ENCODE measurements at regions of chr12 and their contacts with region 1.

Region 1: GRCh38 chr12:121626087-121626852 is at the start of gene ORAI1:
- DNase-seq: peak; percentile 97
- H3K4me3 Mint-ChIP-seq: peak within 1 kb of the TSS; percentile 90
- H3K27ac Mint-ChIP-seq: peak within 1 kb of the TSS; percentile 87
- H3K4me1 Mint-ChIP-seq: peaks cover 46% of the 10 kb centered on the region
- H3K27me3 Mint-ChIP-seq: no peaks in the 10 kb centered on the region
- total RNA-seq, gene ORAI1: 69.0 to 70.3 TPM

Region 2: DNA sequence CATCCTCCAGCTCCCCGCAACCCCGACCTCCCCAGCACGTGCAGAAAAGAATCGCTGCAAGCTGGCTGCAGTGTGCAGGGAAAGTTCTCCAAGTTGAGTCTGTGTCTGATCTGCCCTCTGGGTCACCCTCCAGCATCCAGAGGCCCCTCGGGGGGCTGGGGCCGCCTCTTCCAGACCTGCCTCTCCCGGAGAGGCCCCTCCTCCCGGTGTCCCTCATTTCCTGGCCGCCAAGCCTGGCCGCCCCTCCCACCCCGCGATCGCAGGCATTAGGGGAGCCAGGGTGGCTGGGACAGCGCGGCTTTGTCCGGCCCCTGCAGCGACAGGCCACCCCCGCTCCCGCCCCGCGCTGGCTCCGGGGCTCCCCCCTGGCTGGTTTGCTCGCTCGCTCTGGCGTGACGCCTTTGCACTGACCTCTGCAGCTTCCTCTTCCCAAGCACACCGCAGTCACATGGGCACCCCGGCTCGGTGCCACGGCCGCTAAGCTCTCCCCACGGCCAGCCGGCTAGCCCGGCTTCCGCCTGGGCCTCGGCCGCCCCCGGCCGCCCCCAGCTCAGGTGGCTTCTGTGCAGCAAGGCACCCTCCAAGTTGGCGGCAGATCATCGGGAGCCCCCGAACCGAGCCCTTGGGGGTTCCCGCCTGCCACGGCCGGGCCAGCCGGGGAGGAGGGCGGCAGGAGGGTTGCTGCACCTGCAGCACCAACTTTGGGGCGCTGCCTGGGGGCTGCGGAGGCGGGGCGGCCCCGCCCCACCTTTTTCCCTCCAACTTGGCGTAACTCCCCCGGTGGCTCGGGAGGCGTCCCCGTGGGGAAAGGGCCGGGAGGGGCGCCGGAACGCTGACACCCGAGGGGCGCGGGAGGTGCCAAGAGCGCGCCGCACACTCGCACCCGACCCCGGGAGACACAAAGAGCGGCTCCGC is 89.1 kb before region 1 on chr12:
- CTCF ChIA-PET with region 1: interaction called, 6 read pairs
- POLR2A ChIA-PET with region 1: interaction called, 22 read pairs
- DNase-seq: peak; percentile 68
- H3K4me3 Mint-ChIP-seq: peak overlapping the region; percentile 74
- H3K27ac Mint-ChIP-seq: peak overlapping the region; percentile 63
- H3K4me1 Mint-ChIP-seq: peaks cover 54% of the 10 kb centered on the region
- H3K27me3 Mint-ChIP-seq: no peaks in the 10 kb centered on the region

Region 3: GRCh38 chr12:121579981-121580868 is 46.0 kb before region 1 on chr12:
- CTCF ChIA-PET with region 1: interaction called, 13 read pairs
- POLR2A ChIA-PET with region 1: interaction called, 89 read pairs
- DNase-seq: peak; percentile 80
- H3K4me3 Mint-ChIP-seq: peak overlapping the region; percentile 97
- H3K27ac Mint-ChIP-seq: peak overlapping the region; percentile 99
- H3K4me1 Mint-ChIP-seq: peaks cover 38% of the 10 kb centered on the region
- H3K27me3 Mint-ChIP-seq: no peaks in the 10 kb centered on the region

Region 4: DNA sequence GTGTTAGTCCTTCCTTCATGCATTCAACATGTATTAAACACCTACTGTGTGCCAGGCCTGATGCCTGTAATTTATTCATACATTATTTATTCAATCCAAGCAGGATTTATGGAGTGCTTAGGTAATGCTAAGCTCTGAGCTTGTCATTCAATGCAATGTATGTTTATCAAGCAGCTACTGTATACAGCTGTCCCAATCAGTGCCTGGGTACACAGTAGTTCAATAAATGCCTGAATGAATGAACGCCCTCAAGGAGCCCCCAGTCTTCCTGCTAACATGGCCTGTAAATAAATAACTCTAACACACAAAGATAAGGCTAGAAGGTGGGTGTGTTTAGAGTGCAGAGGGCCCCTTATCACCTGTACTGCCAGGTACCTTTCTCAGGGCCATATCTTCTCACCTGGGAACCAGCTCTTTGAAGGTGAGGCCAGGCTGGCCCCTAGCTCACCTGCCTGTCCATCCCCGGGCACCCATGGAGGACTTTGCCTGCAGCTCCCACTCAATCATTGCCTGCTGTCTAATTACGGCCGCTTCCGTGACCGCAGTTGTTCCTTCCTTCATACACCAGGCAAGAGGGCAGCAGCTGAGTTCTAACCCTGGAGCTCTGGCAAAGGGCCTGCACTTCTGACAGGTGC is 25.5 kb before region 1 on chr12:
- CTCF ChIA-PET with region 1: no interaction called
- POLR2A ChIA-PET with region 1: no interaction called
- DNase-seq: no peak
- H3K4me3 Mint-ChIP-seq: no peak overlapping the region
- H3K27ac Mint-ChIP-seq: no peak overlapping the region
- H3K4me1 Mint-ChIP-seq: peaks cover 3% of the 10 kb centered on the region
- H3K27me3 Mint-ChIP-seq: peaks cover 1% of the 10 kb centered on the region

Region 5: DNA sequence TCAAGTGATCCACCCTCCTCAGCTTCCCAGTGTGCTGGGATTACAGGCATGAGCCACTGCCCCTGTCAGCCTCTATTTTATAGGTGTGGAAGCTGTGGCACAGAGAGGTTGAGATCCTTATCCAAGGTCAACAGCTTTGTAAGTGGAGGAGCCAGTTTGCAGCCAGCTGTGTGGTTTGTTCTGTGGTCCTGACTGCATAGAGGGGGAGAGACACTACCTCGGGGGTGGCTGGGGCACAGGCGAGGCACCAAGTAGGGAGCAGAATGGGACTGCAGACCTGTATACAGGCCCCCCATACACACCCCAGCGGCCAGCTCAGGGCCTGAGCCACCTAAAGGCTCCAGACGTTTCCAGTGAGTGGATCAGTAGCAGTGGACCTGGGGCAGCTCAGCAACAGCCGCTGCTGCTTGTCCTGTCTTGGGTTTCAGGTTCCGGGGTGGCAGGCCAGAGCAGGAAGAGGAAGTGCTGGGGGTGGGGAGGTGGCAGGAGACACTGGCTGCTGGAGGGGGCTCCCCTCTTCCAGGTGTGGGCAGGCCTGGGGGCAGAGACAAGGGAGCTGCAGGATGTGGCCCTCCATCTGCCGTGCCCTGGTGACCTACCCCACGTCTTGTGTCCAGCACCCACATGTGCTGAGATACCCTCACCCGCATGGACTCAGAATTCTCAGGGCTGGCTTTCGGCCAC is 11.1 kb after region 1 on chr12:
- CTCF ChIA-PET with region 1: interaction called, 35 read pairs
- POLR2A ChIA-PET with region 1: interaction called, 76 read pairs
- DNase-seq: peak; percentile 74
- H3K4me3 Mint-ChIP-seq: peak overlapping the region; percentile 59
- H3K27ac Mint-ChIP-seq: peak overlapping the region; percentile 93
- H3K4me1 Mint-ChIP-seq: peaks cover 51% of the 10 kb centered on the region
- H3K27me3 Mint-ChIP-seq: no peaks in the 10 kb centered on the region

Region 6: DNA sequence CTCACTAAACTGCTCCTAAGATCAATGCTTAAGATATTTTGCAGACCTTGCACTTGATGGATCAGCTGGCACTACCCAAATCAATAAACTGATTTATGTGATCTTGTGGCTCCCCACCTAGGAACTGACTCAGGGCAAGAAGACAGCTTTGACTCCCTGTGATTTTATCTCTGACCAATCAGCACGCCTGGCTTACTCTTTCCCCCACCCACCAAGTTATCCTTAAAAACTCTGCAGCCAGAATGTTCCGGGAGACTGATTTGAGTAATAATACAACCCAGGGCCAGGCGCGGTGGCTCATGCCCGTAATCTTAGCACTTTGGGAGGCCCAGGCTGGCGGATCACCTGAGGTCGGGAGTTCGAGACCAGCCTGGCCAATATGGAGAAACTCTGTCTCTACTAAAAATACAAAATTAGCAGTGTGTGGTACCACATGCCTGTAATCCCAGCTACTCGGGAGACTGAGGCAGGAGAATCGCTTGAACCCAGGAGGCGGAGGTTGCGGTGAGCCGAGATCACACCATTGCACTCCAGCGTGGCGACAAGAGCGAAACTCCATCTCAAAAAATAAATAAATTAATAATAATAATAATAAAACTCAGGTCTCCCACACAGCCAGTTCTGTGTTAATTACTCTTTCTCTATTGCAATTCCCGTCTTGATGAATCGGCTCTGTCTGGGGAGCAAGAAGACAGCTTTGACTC is 31.2 kb after region 1 on chr12:
- CTCF ChIA-PET with region 1: interaction called, 35 read pairs
- POLR2A ChIA-PET with region 1: interaction called, 71 read pairs
- DNase-seq: peak; percentile 55
- H3K4me3 Mint-ChIP-seq: peak overlapping the region; percentile 5
- H3K27ac Mint-ChIP-seq: peak overlapping the region; percentile 98
- H3K4me1 Mint-ChIP-seq: peaks cover 76% of the 10 kb centered on the region
- H3K27me3 Mint-ChIP-seq: no peaks in the 10 kb centered on the region

Region 7: DNA sequence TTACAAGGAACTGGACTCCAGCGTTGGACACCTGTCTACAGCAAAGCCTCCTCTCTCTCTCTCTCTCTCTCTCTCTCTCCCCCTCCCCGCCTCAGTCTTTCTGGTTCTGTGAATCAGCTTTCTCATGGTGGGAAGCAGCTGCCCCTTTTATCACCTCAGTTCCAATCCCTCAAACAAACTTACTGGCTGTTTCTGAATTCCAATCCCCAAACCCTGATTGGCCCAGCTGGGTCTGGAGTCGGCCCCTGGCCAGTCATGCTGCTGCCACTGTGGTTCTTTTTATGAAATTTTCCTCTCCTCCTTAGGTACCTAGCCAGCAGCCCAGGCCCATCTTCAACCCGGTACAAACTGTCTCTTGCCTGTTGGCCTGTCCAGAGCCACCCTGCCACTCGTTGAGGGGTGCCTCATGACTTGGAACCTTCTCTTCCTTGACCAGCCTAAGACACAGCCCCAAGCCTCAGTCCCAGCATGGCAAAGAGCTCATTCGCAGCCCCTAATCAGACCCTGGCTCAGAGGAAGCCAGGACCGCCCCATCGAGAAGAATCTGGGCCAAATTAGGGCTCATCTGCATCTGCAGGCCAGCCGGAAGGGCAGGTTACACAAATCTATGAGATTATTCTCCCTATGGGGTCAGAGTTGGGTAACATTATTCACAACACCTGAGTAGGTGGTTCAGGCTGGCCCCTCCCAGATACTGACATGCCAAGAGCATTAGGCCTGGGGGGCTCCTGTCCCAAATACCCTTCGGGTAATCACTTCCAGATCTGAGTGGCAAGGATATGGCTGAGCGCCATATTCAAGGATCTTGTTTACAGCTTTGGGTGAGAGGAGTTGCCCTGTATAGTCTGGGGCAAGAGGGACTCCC is 52.7 kb after region 1 on chr12:
- CTCF ChIA-PET with region 1: interaction called, 12 read pairs
- POLR2A ChIA-PET with region 1: interaction called, 10 read pairs
- DNase-seq: no peak
- H3K4me3 Mint-ChIP-seq: no peak overlapping the region
- H3K27ac Mint-ChIP-seq: no peak overlapping the region
- H3K4me1 Mint-ChIP-seq: peaks cover 11% of the 10 kb centered on the region
- H3K27me3 Mint-ChIP-seq: no peaks in the 10 kb centered on the region

Region 8: DNA sequence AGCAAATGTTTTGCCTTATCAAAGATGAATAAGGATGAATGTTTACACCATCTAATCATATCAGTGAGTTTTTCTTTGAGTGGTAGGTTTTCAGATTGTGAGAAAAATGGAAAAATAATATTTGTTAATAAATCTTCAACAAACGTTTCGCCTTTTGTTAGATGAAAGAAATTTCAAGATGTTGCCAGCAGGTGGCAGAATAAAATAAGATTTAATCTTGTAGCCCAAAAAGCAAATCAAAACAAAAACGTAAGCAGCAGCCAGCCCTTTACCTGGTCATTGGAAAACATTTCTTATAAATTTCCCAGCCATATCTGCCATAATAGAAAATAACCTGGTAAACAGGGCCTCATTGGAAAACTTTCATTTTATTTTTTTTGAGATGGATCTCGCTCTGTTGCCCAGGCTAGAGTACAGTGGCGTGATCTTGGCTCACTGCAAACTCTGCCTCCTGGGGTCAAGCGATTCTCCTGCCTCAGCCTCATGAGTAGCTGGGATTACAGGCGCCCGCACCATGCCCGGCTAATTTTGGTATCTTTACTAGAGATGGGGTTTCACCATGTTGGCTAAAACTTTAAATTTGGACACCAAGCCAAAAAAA is 70.9 kb after region 1 on chr12:
- CTCF ChIA-PET with region 1: no interaction called
- POLR2A ChIA-PET with region 1: no interaction called
- DNase-seq: no peak
- H3K4me3 Mint-ChIP-seq: no peak overlapping the region
- H3K27ac Mint-ChIP-seq: no peak overlapping the region
- H3K4me1 Mint-ChIP-seq: peaks cover 2% of the 10 kb centered on the region
- H3K27me3 Mint-ChIP-seq: no peaks in the 10 kb centered on the region

Region 9: DNA sequence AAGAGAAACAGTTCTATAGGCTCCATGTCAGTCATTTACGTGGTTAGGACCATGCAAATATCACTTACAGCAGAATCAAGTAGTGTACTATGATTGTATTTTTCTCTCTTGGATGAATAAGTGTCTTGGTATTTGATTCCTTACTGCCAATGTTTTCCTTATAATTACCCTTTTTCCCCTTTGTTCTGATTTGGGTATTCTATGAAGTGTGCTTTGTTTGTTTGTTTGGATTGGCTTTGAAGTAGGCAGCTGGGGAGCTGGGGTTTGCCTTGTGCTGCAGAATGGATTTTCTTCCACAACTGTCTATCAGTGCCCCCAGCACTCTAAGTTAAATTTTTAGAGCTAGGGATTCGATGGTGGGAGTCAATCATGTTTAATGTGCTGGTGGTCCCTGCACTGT is 98.7 kb after region 1 on chr12:
- CTCF ChIA-PET with region 1: no interaction called
- POLR2A ChIA-PET with region 1: no interaction called
- DNase-seq: no peak
- H3K4me3 Mint-ChIP-seq: no peak overlapping the region
- H3K27ac Mint-ChIP-seq: no peak overlapping the region
- H3K4me1 Mint-ChIP-seq: no peaks in the 10 kb centered on the region
- H3K27me3 Mint-ChIP-seq: no peaks in the 10 kb centered on the region